A549 (cell line): ENCODE measurements at regions of chr5 and their contacts with region 1.

Region 1: DNA sequence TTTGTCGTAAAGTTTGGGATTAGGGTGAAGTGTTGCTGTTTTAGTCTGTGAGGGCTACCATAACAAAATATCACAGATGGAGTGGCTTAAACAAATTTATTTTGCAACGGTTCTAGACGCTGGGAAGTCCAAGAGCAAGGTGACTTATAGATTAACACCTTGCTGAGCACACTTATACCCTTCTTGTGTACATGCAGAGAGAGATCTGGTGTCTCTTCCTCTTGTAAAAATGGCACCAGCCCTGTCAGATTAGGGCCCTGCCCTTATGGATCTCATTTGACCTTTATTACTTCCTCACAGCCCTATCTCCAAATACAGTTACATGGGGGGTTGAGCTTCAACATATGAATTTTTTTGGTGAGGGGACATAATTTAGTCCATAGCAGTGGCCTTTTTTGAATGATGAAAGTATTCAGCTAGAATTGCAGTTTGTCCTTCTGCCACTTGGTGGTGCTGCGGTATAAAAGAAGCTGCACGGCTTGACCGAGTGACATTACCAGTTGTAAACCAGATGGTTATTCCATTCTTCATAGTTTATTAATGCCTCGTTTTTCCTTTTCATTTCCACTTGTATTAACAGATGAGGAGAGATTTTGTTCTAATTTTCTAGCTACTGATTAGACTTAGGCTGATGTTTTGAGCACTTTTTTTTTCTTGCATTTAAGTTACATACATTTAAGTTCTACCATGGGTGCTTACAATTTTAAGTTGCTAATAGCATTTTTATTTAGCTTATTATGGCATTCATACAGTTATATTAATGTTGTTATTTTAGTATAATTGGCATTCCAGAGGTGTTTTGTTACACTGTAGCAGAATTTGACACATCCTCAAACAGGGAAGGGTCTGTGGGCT is 19.4 kb downstream of the DCP2 start:
- DNase-seq: peak; percentile 46 to 64
- ATAC-seq: peak; percentile 90 to 94
- H3K4me3 ChIP-seq: no peak overlapping the region
- H3K27ac ChIP-seq: no peak overlapping the region
- H3K4me1 ChIP-seq: no peaks in the 10 kb centered on the region
- CTCF ChIP-seq: peak; percentile 88
- EP300 ChIP-seq: no peak
- POLR2A ChIP-seq: no peak
- RAD21 ChIP-seq: peak; percentile 85

Region 2: DNA sequence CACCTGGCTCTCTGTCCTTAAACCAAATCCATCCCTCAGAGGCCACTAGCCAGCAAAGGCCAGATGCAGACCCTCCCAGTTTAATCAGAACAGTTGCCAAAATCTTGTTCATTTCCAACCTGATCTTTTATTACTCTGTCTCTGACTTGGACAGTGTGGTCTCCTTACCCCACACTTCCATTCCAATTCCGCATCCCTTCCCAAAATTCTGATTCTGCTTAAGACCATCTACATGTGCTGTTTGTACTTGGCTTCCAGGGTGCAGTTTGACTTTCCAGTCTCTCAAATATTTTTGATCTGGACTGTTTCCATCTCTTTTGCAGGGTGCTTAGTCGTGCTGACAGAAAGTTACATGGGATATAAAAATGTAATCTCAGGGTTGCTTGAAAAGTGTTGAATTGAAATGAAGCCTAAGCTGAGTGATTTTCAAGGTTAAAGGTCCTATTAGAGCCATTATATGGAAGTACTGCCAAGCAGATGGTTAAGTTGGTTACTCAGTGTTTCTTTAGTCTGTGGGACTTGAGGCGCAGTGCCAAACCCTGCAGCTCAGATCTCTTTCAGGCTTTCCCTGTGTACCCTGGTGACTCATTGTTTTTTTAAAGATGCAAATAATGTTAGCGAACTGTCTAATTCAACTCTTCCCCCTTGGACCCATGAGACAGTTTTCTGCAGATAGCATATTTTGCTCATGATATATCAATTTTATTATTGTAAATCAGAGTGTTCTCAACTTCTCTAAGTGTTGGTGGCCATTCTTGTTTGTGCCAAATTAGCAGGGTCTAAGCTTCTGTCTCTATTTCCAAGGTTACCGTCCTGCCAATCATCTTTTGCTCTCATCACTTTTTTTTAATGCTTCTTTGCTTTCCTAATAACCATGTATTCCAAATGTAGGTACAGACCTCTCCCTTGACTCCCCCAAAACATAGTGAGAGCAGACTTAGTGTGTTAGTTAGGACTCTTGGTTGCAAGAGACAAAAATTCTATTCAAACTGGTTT is 37.6 kb before region 1 on chr5:
- CTCF ChIA-PET with region 1: no interaction called
- POLR2A ChIA-PET with region 1: no interaction called
- DNase-seq: peak; percentile 81 to 88
- ATAC-seq: peak; percentile 92
- H3K4me3 ChIP-seq: peak overlapping the region; percentile 15; the same call in 2 of the 3 replicates
- H3K27ac ChIP-seq: peak overlapping the region; percentile 67 to 78
- H3K4me1 ChIP-seq: peaks cover 53% of the 10 kb centered on the region
- CTCF ChIP-seq: no peak
- EP300 ChIP-seq: peak; percentile 30 to 50; a peak in 2 of 5 replicates
- POLR2A ChIP-seq: no peak
- RAD21 ChIP-seq: no peak

Region 3: GRCh38 chr5:112976432-112977309 is 19.3 kb before region 1 on chr5 and contains the start of gene DCP2:
- CTCF ChIA-PET with region 1: interaction called, 28 read pairs
- POLR2A ChIA-PET with region 1: interaction called, 6 read pairs
- DNase-seq: peak; percentile 99
- ATAC-seq: peak; percentile 96 to 99
- H3K4me3 ChIP-seq: peak within 1 kb of the TSS; percentile 86
- H3K27ac ChIP-seq: peak within 1 kb of the TSS; percentile 88 to 93
- H3K4me1 ChIP-seq: peaks cover 22% of the 10 kb centered on the region
- CTCF ChIP-seq: no peak
- EP300 ChIP-seq: no peak
- POLR2A ChIP-seq: peak; percentile 69
- RAD21 ChIP-seq: no peak
- polyA plus RNA-seq, gene DCP2: 16.1 and 18.5 TPM in 2 replicates

Region 4: GRCh38 chr5:113025596-113025995 is 29.6 kb after region 1 on chr5:
- CTCF ChIA-PET with region 1: interaction called, 10 read pairs
- POLR2A ChIA-PET with region 1: no interaction called
- DNase-seq: no peak
- ATAC-seq: no peak
- H3K4me3 ChIP-seq: no peak overlapping the region
- H3K27ac ChIP-seq: no peak overlapping the region
- H3K4me1 ChIP-seq: peaks cover 3% of the 10 kb centered on the region; the same call in 2 of the 3 replicates
- CTCF ChIP-seq: no peak
- EP300 ChIP-seq: no peak
- POLR2A ChIP-seq: no peak
- RAD21 ChIP-seq: no peak

Region 5: GRCh38 chr5:113336975-113337374 is 341.0 kb after region 1 on chr5:
- CTCF ChIA-PET with region 1: interaction called, 18 read pairs
- POLR2A ChIA-PET with region 1: no interaction called
- DNase-seq: peak; percentile 10 to 51
- ATAC-seq: peak; percentile 81 to 90; a peak in 5 of 6 replicates
- H3K4me3 ChIP-seq: no peak overlapping the region
- H3K27ac ChIP-seq: no peak overlapping the region
- H3K4me1 ChIP-seq: no peaks in the 10 kb centered on the region
- CTCF ChIP-seq: peak; percentile 17; the same call in 1 of the 3 replicates
- EP300 ChIP-seq: no peak
- POLR2A ChIP-seq: no peak
- RAD21 ChIP-seq: peak; percentile 35 to 51; a peak in 2 of 5 replicates

Region 6: DNA sequence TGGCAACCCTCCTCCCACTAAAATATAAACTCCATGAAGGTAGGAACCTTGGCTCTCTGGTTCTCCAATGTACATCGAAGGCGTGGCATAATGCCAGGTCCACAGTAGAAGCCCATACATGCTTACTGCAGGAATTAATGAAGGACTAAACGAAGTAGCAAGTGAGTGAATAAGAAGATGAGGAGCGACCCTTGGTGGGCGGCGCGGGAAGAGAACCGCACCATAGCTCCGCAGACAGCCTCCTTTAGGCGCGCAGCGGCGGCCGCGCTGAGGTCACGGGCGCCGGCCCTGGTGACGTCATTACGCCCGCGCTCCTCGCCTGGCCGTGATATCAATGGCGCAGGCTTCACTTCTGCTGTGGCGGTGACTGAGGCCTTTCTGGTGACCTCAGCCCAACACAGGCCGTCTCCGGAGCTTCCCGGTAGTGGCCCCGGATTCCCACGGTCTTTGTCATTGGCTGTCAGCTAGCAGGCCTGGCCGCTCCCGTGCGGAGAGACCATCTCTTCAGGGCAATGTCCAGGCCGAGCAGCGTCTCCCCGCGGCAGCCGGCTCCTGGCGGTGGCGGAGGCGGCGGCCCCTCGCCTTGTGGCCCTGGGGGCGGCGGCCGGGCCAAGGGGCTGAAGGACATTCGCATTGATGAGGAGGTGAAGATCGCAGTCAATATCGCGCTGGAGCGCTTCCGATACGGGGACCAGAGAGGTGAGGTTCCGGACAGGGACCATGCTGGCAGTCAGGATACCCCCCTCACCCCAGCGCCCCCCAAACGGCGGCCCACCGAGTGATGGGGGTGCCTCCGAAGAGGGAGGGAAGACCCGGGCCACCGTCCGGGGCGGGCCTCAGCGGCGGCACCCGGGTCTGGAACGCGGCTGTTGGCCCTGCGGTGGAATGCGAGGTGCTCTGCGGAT is 517.6 kb after region 1 on chr5 and contains the start of gene YTHDC2:
- CTCF ChIA-PET with region 1: interaction called, 32 read pairs
- POLR2A ChIA-PET with region 1: interaction called, 3 read pairs
- DNase-seq: peak; percentile 51 to 87
- ATAC-seq: peak; percentile 98 to 99
- H3K4me3 ChIP-seq: peak within 1 kb of the TSS; percentile 77
- H3K27ac ChIP-seq: peak within 1 kb of the TSS; percentile 89 to 94
- H3K4me1 ChIP-seq: peaks cover 13% of the 10 kb centered on the region; the same call in 2 of the 3 replicates
- CTCF ChIP-seq: peak; percentile 41
- EP300 ChIP-seq: no peak
- POLR2A ChIP-seq: peak; percentile 92
- RAD21 ChIP-seq: peak; percentile 39 to 51; a peak in 3 of 5 replicates
- polyA plus RNA-seq, gene YTHDC2: 16.5 and 19.0 TPM in 2 replicates